PC-9 (cell line): ENCODE measurements at regions of chr14 and their contacts with region 1.

Region 1: GRCh38 chr14:55540847-55541766 is 38.9 kb upstream of the KTN1 start:
- DNase-seq: peak in 1 of 2 experiments; percentile 77
- H3K4me3 ChIP-seq: peak overlapping the region; percentile 10; the same call in 1 of the 2 replicates
- H3K27ac ChIP-seq: peak overlapping the region; percentile 67
- H3K4me1 ChIP-seq: peaks cover 39% of the 10 kb centered on the region
- H3K27me3 ChIP-seq: no peaks in the 10 kb centered on the region
- CTCF ChIP-seq: no peak

Region 2: DNA sequence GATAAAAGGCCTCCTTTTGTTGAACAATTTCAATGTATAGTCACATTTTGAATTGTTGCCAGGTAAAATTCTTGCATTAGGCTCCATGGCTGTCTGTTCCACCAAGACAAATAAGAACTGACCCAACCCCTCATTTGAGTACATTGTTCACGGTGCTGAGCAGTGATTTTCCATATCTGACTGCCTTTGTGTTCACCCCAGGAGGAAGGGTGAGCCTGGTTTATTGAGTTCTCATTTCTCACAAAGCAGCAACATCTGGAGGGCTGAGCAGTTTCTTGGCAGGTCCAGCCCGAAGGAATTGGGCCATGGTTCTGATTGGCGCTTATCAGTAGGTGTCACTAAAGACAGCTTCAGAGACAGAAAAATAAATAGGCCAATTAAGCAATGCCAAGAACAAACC is 1733.6 kb before region 1 on chr14:
- CTCF ChIA-PET with region 1: no interaction called
- POLR2A ChIA-PET with region 1: no interaction called
- intact Hi-C with region 1: no loop called
- DNase-seq: no peak
- H3K4me3 ChIP-seq: no peak overlapping the region
- H3K27ac ChIP-seq: no peak overlapping the region
- H3K4me1 ChIP-seq: no peaks in the 10 kb centered on the region
- H3K27me3 ChIP-seq: no peaks in the 10 kb centered on the region
- CTCF ChIP-seq: no peak

Region 3: DNA sequence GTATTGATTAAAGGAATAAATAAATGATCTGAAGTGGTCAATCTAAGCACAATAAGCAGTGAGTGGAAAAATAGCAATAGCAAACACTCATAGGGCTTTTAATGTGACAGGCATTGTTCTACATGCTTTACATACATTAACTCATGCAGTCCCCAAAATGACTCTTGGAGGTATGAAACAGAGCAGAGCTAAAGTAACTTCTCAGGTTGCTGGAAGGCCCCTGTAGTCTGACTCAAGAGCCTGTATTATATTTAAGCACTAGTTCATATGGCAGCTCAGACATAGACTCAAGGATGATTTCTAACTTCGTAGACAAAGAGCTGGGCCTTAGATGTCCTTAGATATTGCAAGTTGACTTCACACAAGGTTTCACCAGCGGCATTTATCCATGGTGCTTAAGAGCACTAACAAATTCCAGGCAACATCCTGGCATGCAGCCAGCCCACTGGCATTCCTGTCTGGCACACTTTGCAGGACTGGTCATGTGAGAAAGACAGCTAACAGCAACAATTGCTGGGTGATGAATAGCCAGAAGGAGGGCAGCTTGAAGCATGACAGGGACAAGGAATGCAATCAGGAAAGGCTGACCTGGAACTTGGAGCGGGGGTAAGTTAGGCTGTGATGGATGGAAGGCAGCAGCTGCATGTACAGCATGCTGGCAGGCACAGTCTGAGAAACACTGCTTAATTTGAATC is 16.0 kb after region 1 on chr14:
- CTCF ChIA-PET with region 1: no interaction called
- POLR2A ChIA-PET with region 1: interaction called, 3 read pairs
- intact Hi-C with region 1: loop called (anchors 1 kb)
- DNase-seq: peak; percentile 90 to 91
- H3K4me3 ChIP-seq: no peak overlapping the region
- H3K27ac ChIP-seq: no peak overlapping the region
- H3K4me1 ChIP-seq: peaks cover 14% of the 10 kb centered on the region
- H3K27me3 ChIP-seq: no peaks in the 10 kb centered on the region
- CTCF ChIP-seq: no peak

Region 4: DNA sequence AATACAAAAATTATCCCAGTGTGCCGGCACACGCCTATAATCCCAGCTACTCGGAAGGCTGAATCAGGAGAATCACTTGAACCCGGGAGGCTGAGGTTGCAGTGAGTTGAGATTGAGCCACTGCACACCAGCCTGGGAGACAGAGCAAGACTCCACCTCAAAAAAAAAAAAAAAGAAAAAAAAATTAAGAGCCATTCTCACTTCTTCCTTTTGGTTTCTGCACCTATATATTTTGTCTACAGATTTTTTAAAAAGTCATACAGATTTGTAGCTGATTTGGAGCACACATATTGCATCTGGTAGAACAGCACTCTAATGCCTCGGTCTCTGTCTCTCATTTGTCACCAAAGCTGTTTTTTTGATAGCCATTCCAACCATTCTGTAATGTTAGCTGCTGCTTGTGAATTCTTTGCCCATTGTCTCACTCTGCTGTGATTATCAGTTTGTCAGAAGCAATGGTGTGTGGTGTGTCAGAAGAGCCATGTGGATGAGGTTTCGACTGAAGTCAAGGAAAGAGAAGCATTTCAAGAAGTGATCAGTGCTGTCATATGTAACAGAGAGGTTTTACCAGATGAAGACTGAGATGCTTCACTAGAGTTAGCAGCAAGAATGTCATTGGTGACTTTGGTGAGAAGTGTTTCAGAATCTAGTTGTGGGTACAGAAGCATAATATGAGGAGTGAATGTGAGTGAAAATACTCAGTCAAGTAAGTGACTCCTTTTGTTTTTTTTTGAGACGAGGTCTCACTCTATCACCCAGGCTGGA is 30.2 kb after region 1 on chr14:
- CTCF ChIA-PET with region 1: no interaction called
- POLR2A ChIA-PET with region 1: no interaction called
- intact Hi-C with region 1: no loop called
- DNase-seq: no peak
- H3K4me3 ChIP-seq: no peak overlapping the region
- H3K27ac ChIP-seq: no peak overlapping the region
- H3K4me1 ChIP-seq: no peaks in the 10 kb centered on the region
- H3K27me3 ChIP-seq: no peaks in the 10 kb centered on the region
- CTCF ChIP-seq: no peak

Region 5: GRCh38 chr14:55593698-55594097 is 52.6 kb after region 1 on chr14:
- CTCF ChIA-PET with region 1: no interaction called
- POLR2A ChIA-PET with region 1: no interaction called
- intact Hi-C with region 1: no loop called
- DNase-seq: no peak
- H3K4me3 ChIP-seq: no peak overlapping the region
- H3K27ac ChIP-seq: peak overlapping the region; percentile 5; the same call in 1 of the 2 replicates
- H3K4me1 ChIP-seq: peaks cover 13% of the 10 kb centered on the region; the same call in 1 of the 2 replicates
- H3K27me3 ChIP-seq: no peaks in the 10 kb centered on the region
- CTCF ChIP-seq: no peak